ENCODE measurements at regions of chr13 and their contacts with region 1.

Region 1: DNA sequence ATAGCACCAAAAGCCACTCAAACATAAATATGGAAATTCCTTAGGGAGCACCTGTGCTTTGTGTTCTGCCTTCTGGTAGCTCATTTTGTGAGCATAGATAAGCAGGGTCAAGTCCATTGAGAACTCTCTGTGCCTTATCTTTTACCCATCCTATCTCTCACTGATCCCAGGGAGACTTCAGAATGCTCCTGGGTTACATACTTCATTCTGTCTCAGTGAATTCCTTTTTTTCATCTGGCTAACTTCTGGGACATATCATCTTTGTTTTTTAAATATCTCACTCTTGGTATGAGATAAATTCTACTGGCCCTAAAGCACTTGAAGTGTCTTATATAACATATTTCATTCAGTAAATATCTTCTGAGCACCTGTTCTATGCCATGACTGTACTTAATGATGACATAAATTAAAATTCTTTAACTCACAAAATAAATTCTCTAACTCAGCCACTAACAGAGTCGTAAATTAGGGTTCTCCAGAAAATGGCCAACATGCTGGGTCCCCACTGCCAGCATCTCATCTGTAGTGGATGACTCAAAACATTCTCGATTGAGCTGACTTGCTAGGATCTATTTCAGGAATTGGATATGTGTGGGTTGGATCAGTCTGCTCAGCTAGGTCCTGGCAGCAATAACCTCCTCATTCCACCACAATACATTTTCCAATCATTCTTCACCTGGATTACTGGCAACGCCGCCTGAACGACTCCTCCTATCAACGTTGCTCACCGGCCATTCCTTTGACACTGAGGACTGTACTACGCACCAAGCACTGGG is 170.2 kb downstream of the FOXO1 start:
- DNase-seq: no peak
- H3K4me3 Mint-ChIP-seq: no peak overlapping the region
- H3K27ac Mint-ChIP-seq: peak overlapping the region; percentile 90
- H3K4me1 Mint-ChIP-seq: peaks cover 62% of the 10 kb centered on the region
- H3K27me3 Mint-ChIP-seq: no peaks in the 10 kb centered on the region

Region 2: GRCh38 chr13:40485611-40486517 is 10.4 kb before region 1 on chr13:
- CTCF ChIA-PET with region 1: interaction called, 10 read pairs
- POLR2A ChIA-PET with region 1: no interaction called
- DNase-seq: peak; percentile 86
- H3K4me3 Mint-ChIP-seq: peak overlapping the region; percentile 54
- H3K27ac Mint-ChIP-seq: peak overlapping the region; percentile 98
- H3K4me1 Mint-ChIP-seq: peaks cover 82% of the 10 kb centered on the region
- H3K27me3 Mint-ChIP-seq: no peaks in the 10 kb centered on the region